Endothelial cell of umbilical vein (primary cell): ENCODE measurements at regions of chr19 and their contacts with region 1.

Region 1: DNA sequence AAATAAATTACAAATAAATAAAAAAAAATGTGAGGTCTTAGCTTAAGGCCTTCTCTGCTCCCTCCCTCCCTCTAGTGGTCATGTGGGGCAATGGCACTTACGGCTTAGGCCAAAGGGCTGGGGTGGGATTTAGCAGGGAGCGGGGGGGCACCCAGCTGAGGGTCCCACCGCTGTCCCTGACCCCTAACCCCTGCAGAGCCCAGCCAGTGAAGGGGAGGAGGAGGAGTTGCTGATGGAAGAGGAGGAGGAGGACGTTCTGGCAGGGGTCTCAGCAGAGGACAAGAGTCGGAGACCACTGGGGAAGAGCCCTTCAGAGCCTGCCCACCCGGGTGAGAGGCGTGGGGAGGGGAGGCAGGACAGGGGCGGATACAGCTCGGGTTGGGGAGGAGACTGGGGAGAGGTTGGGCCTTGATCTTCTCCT is 9.3 kb downstream of the MPND start:
- DNase-seq: peak; percentile 66
- H3K4me3 ChIP-seq: no peak overlapping the region
- H3K27ac ChIP-seq: no peak overlapping the region
- H3K4me1 ChIP-seq: no peaks in the 10 kb centered on the region
- H3K27me3 ChIP-seq: no peaks in the 10 kb centered on the region
- CTCF ChIP-seq: peak; percentile 76 to 85
- POLR2A ChIP-seq: no peak

Region 2: DNA sequence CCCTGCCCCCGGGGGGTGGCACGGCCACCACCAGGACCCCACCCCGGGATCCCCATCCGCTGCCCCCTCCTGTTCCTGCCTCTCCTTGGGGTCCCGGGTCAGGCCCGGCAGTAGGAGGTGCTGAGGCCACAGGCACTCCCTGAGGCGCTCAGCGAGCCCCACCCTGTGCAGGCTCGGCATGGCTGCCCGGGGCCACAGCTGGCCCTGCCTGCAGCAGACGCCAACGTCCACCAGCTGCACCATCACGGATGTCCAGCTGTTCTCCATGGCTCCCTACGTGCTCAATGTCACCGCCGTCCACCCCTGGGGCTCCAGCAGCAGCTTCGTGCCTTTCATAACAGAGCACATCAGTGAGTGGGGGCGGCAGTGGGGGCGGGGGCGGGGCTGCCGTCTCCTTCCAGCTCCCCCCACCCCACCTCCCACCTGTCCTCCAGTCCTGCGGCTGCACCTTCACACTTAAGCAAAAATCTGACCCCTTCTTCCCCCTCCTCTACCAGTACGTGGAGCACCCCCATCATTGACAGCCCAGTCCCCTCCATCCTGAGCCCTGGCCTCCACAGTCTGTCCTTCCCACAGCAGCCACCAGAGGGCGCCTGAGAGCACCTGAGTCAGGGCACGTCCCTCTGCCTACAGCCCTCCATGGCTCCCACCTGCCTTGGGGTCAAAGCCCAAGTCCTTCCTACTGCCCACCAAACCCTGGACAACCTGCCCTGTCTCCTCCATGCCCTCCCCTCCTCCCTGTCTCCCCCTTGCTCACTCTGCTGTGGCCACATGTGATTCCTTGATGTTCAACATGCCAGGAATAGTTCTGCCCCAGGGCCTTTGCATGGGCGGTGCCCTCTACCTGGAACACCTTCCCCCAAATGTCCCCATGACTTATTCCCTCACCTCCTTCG is 119.5 kb before region 1 on chr19:
- CTCF ChIA-PET with region 1: interaction called, 5 read pairs
- POLR2A ChIA-PET with region 1: no interaction called
- dilution Hi-C with region 1: no loop called
- intact Hi-C with region 1: loop called (anchors 1 kb)
- DNase-seq: no peak
- H3K4me3 ChIP-seq: no peak overlapping the region
- H3K27ac ChIP-seq: no peak overlapping the region
- H3K4me1 ChIP-seq: no peaks in the 10 kb centered on the region
- H3K27me3 ChIP-seq: peaks cover 0 to 4% of the 10 kb centered on the region in 2 experiments
- CTCF ChIP-seq: peak; percentile 63 to 80
- POLR2A ChIP-seq: no peak

Region 3: DNA sequence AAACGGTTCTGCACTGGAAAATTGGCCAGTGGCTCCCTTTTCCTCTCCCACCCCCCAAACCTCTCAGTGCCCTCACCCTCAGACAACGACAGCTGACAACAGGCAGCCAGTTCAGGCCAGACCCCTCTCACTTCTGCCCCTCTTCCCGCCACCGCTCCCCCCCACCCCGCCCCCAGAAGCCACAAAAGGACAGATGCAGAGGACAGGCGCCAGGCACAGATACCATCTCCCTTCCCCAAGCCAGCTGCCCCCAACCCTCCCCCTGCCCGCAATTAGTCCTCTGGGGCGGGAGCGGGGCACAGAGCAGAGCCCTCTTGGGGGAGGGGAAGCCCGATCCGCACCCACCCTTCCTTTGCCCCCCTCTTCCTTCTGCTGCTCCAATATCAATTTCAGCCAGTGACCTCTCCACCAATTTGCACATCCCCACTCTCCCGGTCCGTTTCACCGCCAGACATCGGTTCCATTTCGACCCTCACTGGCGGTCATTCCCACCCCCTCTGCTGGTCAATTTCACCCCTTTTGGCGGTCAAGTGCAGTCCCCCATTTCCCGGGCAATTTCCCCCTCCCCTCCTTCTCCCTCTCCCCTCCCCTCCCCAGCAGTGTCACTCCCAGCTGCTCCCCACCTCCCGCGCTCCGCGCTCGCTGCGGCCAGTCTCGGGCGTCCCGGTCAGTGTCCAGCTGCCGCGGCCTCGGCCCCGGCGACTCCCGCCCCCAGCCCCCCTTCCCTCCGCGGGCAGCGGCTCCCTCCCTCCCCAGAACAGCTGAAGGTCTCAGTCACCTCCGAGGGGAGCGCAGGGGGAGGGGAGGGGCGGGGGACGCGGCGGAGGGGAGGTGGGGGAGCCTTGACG is 74.1 kb before region 1 on chr19 and contains the start of gene SHD:
- CTCF ChIA-PET with region 1: interaction called, 10 read pairs
- POLR2A ChIA-PET with region 1: no interaction called
- dilution Hi-C with region 1: no loop called
- intact Hi-C with region 1: no loop called
- DNase-seq: no peak
- H3K4me3 ChIP-seq: no peak within 1 kb of the TSS
- H3K27ac ChIP-seq: no peak within 1 kb of the TSS
- H3K4me1 ChIP-seq: no peaks in the 10 kb centered on the region
- H3K27me3 ChIP-seq: peaks cover 19 to 30% of the 10 kb centered on the region in 2 experiments
- CTCF ChIP-seq: no peak
- POLR2A ChIP-seq: no peak
- total RNA-seq, gene SHD: not detected in 2 replicates

Region 4: GRCh38 chr19:4362861-4363510 is 10.3 kb after region 1 on chr19:
- CTCF ChIA-PET with region 1: interaction called, 12 read pairs
- POLR2A ChIA-PET with region 1: no interaction called
- dilution Hi-C with region 1: no loop called
- intact Hi-C with region 1: no loop called
- DNase-seq: no peak
- H3K4me3 ChIP-seq: no peak overlapping the region
- H3K27ac ChIP-seq: no peak overlapping the region
- H3K4me1 ChIP-seq: no peaks in the 10 kb centered on the region
- H3K27me3 ChIP-seq: no peaks in the 10 kb centered on the region
- CTCF ChIP-seq: peak; percentile 9 to 26
- POLR2A ChIP-seq: no peak

Region 5: DNA sequence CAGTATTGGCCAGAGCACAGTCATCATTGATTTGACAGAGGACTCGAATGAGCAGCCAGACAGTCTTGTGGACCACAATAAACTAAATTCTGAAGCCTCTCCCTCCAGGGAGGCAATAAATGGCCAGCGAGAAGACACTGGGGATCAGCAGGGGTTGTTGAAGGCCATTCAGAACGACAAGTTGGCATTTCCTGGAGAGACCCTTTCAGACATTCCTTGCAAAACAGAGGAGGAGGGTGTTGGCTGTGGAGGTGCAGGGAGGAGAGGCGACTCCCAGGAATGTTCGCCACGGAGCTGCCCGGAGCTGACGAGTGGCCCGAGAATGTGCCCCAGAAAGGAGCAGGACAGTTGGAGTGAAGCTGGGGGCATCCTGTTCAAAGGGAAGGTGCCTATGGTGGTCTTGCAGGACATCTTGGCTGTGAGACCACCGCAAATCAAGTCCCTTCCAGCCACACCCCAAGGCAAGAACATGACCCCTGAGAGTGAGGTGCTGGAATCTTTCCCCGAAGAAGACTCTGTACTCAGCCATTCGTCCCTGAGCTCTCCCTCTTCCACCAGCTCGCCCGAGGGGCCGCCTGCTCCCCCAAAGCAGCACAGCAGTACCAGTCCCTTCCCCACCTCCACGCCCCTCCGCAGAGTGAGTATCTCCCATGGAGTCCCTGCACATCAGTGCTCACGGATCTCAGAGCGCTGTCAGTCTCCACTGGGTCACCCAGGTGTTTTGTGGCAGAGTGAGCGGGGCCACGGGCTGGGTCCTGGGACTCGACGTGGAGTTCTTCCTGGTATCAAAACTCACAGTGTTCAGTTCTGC is 56.6 kb after region 1 on chr19:
- CTCF ChIA-PET with region 1: no interaction called
- POLR2A ChIA-PET with region 1: no interaction called
- dilution Hi-C with region 1: no loop called
- intact Hi-C with region 1: no loop called
- DNase-seq: no peak
- H3K4me3 ChIP-seq: no peak overlapping the region
- H3K27ac ChIP-seq: no peak overlapping the region
- H3K4me1 ChIP-seq: no peaks in the 10 kb centered on the region
- H3K27me3 ChIP-seq: no peaks in the 10 kb centered on the region
- CTCF ChIP-seq: no peak
- POLR2A ChIP-seq: no peak

Region 6: GRCh38 chr19:4464815-4465581 is 112.3 kb after region 1 on chr19:
- CTCF ChIA-PET with region 1: no interaction called
- POLR2A ChIA-PET with region 1: no interaction called
- dilution Hi-C with region 1: no loop called
- intact Hi-C with region 1: no loop called
- DNase-seq: no peak
- H3K4me3 ChIP-seq: no peak overlapping the region
- H3K27ac ChIP-seq: no peak overlapping the region
- H3K4me1 ChIP-seq: no peaks in the 10 kb centered on the region
- H3K27me3 ChIP-seq: no peaks in the 10 kb centered on the region
- CTCF ChIP-seq: no peak
- POLR2A ChIP-seq: no peak